Activated B cell treated with CpG ODN at 0.5 μM for 24 hours (primary cell): ENCODE measurements at regions of chr15 and their contacts with region 1.

Region 1: DNA sequence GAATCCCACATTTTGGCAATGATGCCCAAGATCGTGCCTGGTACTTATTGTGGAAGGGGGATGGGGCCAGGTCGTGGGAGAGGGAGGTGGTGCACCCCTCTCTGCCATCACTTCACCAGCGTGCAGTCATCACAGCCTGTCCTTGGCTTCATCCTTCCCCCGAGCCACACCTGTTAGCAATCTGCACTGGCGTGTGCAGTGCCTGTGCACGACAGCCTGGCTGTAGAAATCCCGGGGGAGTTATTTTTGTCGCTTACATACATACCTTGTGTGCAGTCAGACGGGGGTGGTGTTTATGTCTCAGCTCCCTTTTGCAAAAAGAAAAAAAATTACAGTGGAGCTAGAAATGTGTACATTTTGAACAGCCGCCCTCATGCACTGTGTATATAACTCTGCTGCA is 216.0 kb downstream of the TLE3 start:
- DNase-seq: peak; percentile 54
- ATAC-seq: peak; percentile 94
- H3K4me3 Mint-ChIP-seq: peak overlapping the region; percentile 73
- H3K27ac Mint-ChIP-seq: peak overlapping the region; percentile 82
- H3K4me1 Mint-ChIP-seq: peaks cover 36% of the 10 kb centered on the region
- H3K27me3 Mint-ChIP-seq: peaks cover 3% of the 10 kb centered on the region
- CTCF ChIP-seq: no peak

Region 2: GRCh38 chr15:69760890-69761568 is 120.7 kb before region 1 on chr15:
- CTCF ChIA-PET with region 1: no interaction called
- POLR2A ChIA-PET with region 1: interaction called, 32 read pairs
- intact Hi-C with region 1: loop called (anchors 1 kb)
- DNase-seq: peak; percentile 41
- ATAC-seq: peak; percentile 71
- H3K4me3 Mint-ChIP-seq: peak overlapping the region; percentile 11
- H3K27ac Mint-ChIP-seq: peak overlapping the region; percentile 57
- H3K4me1 Mint-ChIP-seq: peaks cover 74% of the 10 kb centered on the region
- H3K27me3 Mint-ChIP-seq: no peaks in the 10 kb centered on the region
- CTCF ChIP-seq: no peak

Region 3: DNA sequence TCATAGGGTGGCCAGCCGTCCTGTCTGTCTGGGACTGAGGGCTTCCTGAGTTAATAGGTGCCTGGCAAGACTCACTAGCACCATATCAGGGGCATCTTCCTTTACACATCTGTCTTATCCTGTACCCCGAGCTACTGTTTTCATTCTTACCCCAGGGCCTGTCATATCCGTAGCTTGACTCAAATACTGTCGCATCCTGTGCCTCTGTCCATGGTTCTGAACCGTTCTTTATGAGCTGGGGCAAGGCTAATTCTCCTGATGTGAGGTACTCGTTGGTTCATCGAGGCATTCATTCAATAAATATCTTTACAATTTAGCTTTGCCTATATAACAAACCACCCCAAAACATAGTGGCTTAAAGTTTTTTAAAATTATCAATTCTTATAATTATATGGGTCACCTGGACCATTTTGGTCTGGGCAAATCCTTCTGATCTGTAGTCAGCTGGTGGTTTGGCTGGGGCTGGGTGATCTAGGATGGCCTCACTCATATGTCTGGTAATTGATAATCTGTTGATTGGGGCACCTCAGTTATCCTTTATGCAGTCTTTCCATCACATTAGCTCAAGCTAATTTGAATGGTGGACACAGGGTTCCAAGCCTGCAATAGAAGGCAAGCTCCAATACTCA is 94.7 kb after region 1 on chr15:
- CTCF ChIA-PET with region 1: no interaction called
- POLR2A ChIA-PET with region 1: interaction called, 9 read pairs
- intact Hi-C with region 1: loop called (anchors 1 kb)
- DNase-seq: no peak
- ATAC-seq: no peak
- H3K4me3 Mint-ChIP-seq: no peak overlapping the region
- H3K27ac Mint-ChIP-seq: peak overlapping the region; percentile 25
- H3K4me1 Mint-ChIP-seq: peaks cover 28% of the 10 kb centered on the region
- H3K27me3 Mint-ChIP-seq: peaks cover 33% of the 10 kb centered on the region
- CTCF ChIP-seq: no peak

Region 4: DNA sequence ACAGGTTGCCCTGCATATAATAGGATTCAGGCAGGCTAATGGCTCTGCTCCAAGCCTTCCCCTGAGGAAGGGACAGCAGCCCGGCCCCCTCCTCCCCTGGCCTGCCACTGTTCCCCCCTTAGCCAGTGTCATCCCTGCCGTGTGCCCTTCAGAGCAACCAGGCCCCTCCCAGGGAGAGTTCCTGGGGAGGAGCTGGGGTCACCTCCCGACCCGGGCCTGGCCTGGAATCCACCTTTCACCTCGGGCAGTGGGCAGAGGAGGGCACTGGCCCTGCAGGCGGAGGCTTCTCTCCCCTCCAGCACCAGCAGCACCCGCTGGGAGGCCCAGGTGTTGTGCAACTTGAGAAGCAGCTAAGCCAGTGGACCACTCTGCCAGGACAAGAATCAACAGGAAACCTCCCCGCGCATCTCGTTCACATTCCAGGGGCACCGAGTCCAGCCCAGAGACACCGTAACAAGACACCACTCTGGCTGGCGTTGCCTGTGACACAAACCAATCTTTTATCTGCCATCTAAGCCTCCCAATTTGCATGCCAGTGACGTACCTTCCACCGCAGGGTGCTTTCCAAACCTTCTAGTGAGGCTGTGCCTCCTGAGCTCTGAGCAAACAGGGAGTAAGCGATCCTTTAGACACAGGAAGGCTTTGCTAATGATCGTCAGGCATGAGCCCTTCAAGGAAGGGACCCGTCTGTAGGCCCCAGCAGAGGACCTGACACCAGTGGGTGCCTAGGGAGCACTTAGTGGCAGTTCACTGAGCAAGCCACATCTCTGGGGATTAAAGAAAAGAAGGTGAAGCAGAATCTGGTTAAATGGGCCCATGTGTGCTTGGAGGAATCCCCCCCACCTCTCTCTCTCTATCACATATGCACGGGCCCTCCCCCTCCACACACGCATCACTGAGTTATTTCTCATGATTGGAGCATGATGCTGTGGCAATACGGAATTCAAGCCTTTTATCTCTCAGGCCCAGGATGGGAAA is 314.8 kb after region 1 on chr15:
- CTCF ChIA-PET with region 1: no interaction called
- POLR2A ChIA-PET with region 1: no interaction called
- intact Hi-C with region 1: loop called (anchors 2 kb)
- DNase-seq: peak; percentile 62
- ATAC-seq: peak; percentile 82
- H3K4me3 Mint-ChIP-seq: peak overlapping the region; percentile 55
- H3K27ac Mint-ChIP-seq: peak overlapping the region; percentile 79
- H3K4me1 Mint-ChIP-seq: peaks cover 58% of the 10 kb centered on the region
- H3K27me3 Mint-ChIP-seq: peaks cover 7% of the 10 kb centered on the region
- CTCF ChIP-seq: no peak

Region 5: GRCh38 chr15:70318594-70319465 is 437.1 kb after region 1 on chr15:
- CTCF ChIA-PET with region 1: no interaction called
- POLR2A ChIA-PET with region 1: interaction called, 3 read pairs
- intact Hi-C with region 1: loop called (anchors 1 kb)
- DNase-seq: no peak
- ATAC-seq: peak; percentile 25
- H3K4me3 Mint-ChIP-seq: peak overlapping the region; percentile 72
- H3K27ac Mint-ChIP-seq: peak overlapping the region; percentile 85
- H3K4me1 Mint-ChIP-seq: peaks cover 57% of the 10 kb centered on the region
- H3K27me3 Mint-ChIP-seq: no peaks in the 10 kb centered on the region
- CTCF ChIP-seq: no peak